ENCODE measurements at regions of chr3 and their contacts with region 1.

Region 1: DNA sequence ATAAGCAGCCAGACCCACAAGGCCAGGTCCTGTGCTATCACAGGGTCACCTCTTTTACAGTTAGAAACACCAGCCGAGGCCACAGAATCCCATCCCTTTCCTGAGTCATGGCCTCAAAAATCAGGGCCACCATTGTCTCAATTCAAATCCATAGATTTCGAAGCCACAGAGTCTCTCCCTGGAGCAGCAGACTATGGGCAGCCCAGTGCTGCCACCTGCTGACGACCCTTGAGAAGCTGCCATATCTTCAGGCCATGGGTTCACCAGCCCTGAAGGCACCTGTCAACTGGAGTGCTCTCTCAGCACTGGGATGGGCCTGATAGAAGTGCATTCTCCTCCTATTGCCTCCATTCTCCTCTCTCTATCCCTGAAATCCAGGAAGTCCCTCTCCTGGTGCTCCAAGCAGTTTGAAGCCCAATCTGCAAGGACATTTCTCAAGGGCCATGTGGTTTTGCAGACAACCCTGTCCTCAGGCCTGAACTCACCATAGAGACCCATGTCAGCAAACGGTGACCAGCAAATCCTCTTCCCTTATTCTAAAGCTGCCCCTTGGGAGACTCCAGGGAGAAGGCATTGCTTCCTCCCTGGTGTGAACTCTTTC is 39.6 kb downstream of the TGM4 start:
- DNase-seq: peak; percentile 52 to 72
- ATAC-seq: peak; percentile 63 to 83 (median 75)
- H3K4me3 ChIP-seq: no peak overlapping the region
- H3K27ac ChIP-seq: no peak overlapping the region
- H3K4me1 ChIP-seq: no peaks in the 10 kb centered on the region
- H3K27me3 ChIP-seq: no peaks in the 10 kb centered on the region
- CTCF ChIP-seq: peak; percentile 71

Region 2: GRCh38 chr3:44529927-44530326 is 384.0 kb before region 1 on chr3:
- intact Hi-C with region 1: loop called (anchors 2 to 5 kb)
- DNase-seq: no peak
- ATAC-seq: no peak
- H3K4me3 ChIP-seq: no peak overlapping the region
- H3K27ac ChIP-seq: no peak overlapping the region
- H3K4me1 ChIP-seq: no peaks in the 10 kb centered on the region
- H3K27me3 ChIP-seq: peaks cover 0 to 5% (median 0%) of the 10 kb centered on the region in 3 donors
- CTCF ChIP-seq: no peak

Measured in psoas muscle (tissue), 8 donors.